Mammary epithelial cell (primary cell): ENCODE measurements at regions of chr5 and their contacts with region 1.

Region 1: DNA sequence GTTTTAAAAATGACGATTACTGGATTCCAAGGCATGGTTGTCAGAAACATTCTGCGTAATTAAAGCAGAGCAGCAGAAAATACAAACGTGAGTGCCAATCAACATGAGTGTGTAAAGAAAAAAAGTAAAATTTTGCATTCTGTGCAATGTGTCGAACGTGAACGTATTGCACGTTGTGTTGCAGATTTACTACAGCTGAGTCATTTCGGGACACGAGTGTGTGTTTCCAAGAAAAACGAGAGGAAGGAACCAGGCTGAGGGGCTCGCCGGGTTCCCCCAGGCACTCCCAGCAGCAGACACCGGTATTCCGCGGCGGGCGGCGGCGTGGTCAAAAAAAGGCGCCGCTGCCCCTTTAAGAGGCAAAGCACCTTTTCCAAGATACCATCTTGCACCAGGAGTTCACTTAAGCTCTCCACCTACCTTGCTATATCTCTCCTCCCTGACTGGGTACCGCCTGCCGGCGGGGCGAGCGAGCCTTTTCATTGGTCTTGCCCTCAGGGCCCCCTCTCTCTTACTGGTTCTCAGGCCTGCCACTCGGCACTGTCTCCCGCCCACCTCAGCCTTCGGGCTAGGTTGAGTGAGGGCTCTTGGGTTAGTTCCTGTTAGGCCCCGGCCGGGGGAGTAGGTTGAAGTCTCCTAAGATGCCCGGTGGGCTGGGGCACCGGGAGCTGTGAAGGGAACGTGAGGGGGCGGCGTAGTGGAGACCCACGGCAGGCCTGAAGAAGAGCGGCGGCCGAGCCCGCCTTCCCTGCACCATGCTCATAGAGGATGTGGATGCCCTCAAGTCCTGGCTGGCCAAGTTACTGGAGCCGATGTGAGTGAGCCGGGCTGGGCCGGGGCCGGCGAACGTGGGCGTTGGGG is at the start of gene RBM27:
- DNase-seq: peak; percentile 97
- H3K4me3 ChIP-seq: peak within 1 kb of the TSS; percentile 91 to 97 (median 95)
- H3K27ac ChIP-seq: peak within 1 kb of the TSS; percentile 73
- H3K4me1 ChIP-seq: peaks cover 7% of the 10 kb centered on the region
- H3K27me3 ChIP-seq: no peaks in the 10 kb centered on the region
- CTCF ChIP-seq: no peak
- total RNA-seq, gene RBM27: 18.4 to 25.5 TPM

Region 2: DNA sequence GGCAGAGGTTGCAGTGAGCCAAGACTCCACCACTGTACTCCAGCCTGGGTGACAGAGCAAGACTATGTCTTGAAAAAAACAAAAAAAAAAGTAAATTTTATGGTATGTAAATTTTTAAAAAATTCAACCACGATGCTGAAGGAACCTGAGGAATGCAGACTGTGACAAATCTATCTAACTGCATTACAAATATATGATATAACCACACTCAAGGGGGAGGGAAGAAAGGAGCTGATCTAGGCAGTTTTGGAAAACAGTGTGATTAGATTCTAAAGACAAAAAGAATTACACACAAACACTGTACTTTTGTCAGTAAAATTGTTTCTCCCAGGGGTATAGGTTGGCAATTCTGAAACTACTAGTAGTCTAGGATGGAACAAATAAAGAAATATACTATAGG is 37.8 kb before region 1 on chr5:
- CTCF ChIA-PET with region 1: no interaction called
- dilution Hi-C with region 1: no loop called
- in situ Hi-C with region 1: no loop called
- intact Hi-C with region 1: no loop called
- DNase-seq: no peak
- H3K4me3 ChIP-seq: no peak overlapping the region
- H3K27ac ChIP-seq: no peak overlapping the region
- H3K4me1 ChIP-seq: no peaks in the 10 kb centered on the region
- H3K27me3 ChIP-seq: no peaks in the 10 kb centered on the region
- CTCF ChIP-seq: no peak

Region 3: GRCh38 chr5:146188358-146188757 is 14.9 kb before region 1 on chr5:
- CTCF ChIA-PET with region 1: no interaction called
- dilution Hi-C with region 1: no loop called
- in situ Hi-C with region 1: no loop called
- intact Hi-C with region 1: loop called (anchors 1 kb)
- DNase-seq: peak; percentile 74
- H3K4me3 ChIP-seq: no peak overlapping the region
- H3K27ac ChIP-seq: no peak overlapping the region
- H3K4me1 ChIP-seq: peaks cover 17% of the 10 kb centered on the region
- H3K27me3 ChIP-seq: no peaks in the 10 kb centered on the region
- CTCF ChIP-seq: no peak